ENCODE measurements at regions of chr19 and their contacts with region 1.

Region 1: GRCh38 chr19:38335949-38336637 is 463 bp downstream of the CATSPERG start:
- DNase-seq: peak; percentile 98
- H3K4me3 Mint-ChIP-seq: peak overlapping the region; percentile 96
- H3K27ac Mint-ChIP-seq: peak overlapping the region; percentile 96
- H3K4me1 Mint-ChIP-seq: peaks cover 14% of the 10 kb centered on the region
- H3K27me3 Mint-ChIP-seq: no peaks in the 10 kb centered on the region

Region 2: DNA sequence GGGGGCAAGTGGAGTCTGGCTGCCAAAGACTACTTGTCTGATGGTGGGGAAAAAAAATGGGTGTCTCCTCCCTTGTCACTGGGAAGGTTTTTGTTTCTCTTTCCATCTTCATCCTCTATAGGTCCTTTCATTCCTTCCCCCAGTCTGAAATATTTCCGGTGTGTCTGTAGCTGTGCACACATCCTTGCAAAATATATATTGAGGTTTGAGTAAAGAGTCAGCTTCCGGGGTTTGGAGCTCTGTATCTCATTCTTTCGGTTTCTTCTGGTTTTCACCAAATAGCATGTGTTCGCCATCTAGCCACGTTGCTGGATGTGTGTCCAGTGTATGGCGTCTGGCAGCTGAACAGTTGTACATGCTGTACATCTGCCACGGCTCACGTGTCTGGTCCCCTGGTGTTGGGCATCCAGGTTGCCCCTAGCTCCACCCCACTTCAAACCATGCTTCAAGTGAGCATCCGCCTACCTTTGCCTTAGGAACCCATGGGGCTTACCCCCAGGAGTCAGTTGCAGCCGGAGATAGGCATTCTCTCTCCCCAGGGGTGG is 286.9 kb before region 1 on chr19:
- CTCF ChIA-PET with region 1: no interaction called
- intact Hi-C with region 1: loop called (anchors 2 kb)
- DNase-seq: peak; percentile 67
- H3K4me3 Mint-ChIP-seq: peak overlapping the region; percentile 73
- H3K27ac Mint-ChIP-seq: peak overlapping the region; percentile 96
- H3K4me1 Mint-ChIP-seq: peaks cover 43% of the 10 kb centered on the region
- H3K27me3 Mint-ChIP-seq: no peaks in the 10 kb centered on the region

Region 3: GRCh38 chr19:38263689-38264485 is 72.2 kb before region 1 on chr19:
- CTCF ChIA-PET with region 1: interaction called, 3 read pairs
- intact Hi-C with region 1: loop called (anchors 1 kb)
- DNase-seq: peak; percentile 86
- H3K4me3 Mint-ChIP-seq: peak overlapping the region; percentile 80
- H3K27ac Mint-ChIP-seq: peak overlapping the region; percentile 90
- H3K4me1 Mint-ChIP-seq: peaks cover 34% of the 10 kb centered on the region
- H3K27me3 Mint-ChIP-seq: peaks cover 3% of the 10 kb centered on the region

Region 4: GRCh38 chr19:38374429-38375176 is 38.5 kb after region 1 on chr19 and contains the start of gene PSMD8:
- CTCF ChIA-PET with region 1: interaction called, 15 read pairs
- intact Hi-C with region 1: loop called (anchors 1 kb)
- DNase-seq: peak; percentile 100
- H3K4me3 Mint-ChIP-seq: peak within 1 kb of the TSS; percentile 98
- H3K27ac Mint-ChIP-seq: peak within 1 kb of the TSS; percentile 93
- H3K4me1 Mint-ChIP-seq: peaks cover 32% of the 10 kb centered on the region
- H3K27me3 Mint-ChIP-seq: no peaks in the 10 kb centered on the region
- total RNA-seq, gene PSMD8: 194 to 204 TPM

Region 5: DNA sequence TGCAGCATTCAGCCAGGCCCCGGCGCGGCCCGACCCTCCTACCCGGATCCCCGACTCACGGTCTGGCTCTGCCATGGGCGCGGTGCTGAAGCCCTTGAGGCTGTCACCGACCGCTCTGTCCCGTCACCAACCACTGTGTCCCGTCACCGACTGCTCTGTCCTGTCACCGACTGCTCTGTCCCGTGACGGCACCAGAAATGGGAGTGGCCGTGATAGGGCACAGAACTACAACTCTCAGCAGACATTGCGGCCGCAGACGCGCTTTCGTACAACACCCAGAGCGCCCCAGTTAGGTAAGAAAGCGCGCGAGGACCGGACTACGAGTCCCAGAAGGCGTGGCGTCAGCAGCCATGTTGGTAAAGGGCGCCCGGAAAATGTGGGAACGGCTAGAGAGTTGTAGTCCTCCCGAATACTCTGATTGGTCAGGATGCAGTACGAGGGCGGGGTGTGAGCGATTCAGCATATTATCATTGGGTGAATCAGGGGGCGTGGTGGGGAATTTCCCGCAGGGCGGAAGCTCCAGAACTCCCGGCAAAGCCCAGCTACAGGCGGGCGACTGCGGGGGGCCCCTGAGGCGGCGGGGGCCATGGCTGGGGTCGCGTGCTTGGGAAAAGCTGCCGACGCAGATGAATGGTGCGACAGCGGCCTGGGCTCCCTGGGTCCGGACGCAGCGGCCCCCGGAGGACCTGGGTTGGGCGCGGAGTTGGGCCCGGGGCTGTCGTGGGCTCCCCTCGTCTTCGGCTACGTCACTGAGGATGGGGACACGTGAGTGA is 563.5 kb after region 1 on chr19 and contains the starts of genes NFKBIB and SIRT2:
- CTCF ChIA-PET with region 1: no interaction called
- intact Hi-C with region 1: loop called (anchors 1 kb)
- DNase-seq: peak; percentile 100
- H3K4me3 Mint-ChIP-seq: peak within 1 kb of the TSS; percentile 96
- H3K27ac Mint-ChIP-seq: peak within 1 kb of the TSS; percentile 86
- H3K4me1 Mint-ChIP-seq: peaks cover 41% of the 10 kb centered on the region
- H3K27me3 Mint-ChIP-seq: no peaks in the 10 kb centered on the region
- total RNA-seq, gene NFKBIB: 47.2 to 52.7 TPM
- total RNA-seq, gene SIRT2: 18.2 to 19.6 TPM

Measured in activated naive CD4-positive, alpha-beta T cell treated with anti-CD3 and anti-CD28 coated beads for 36 hours (primary cell).